Vagina (tissue), 2 donors: ENCODE measurements at regions of chr15 and their contacts with region 1.

Region 1: GRCh38 chr15:57743424-57743823 is 36.9 kb downstream of the POLR2M start:
- DNase-seq: no peak
- H3K4me3 ChIP-seq: no peak overlapping the region
- H3K27ac ChIP-seq: no peak overlapping the region
- H3K4me1 ChIP-seq: peaks cover 17% of the 10 kb centered on the region
- H3K27me3 ChIP-seq: no peaks in the 10 kb centered on the region
- CTCF ChIP-seq: no peak
- POLR2A ChIP-seq: no peak

Region 2: DNA sequence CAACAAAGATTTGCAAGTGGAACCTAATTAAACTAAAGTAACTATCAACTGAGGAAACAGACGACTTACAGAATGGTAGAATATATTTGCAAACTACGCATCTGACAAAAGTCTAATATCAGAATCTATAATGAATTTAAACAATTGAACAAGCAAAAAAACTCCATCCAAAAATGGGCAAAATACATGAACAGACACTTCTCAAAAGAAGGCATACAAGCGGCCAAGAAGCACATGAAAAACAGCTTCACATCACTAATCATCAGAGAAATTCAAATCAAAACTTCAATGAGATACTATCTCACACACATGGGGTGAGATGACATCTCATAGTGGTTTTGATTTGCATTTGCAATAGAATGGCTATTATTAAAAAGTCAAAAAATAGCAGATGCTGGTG is 91.7 kb after region 1 on chr15:
- intact Hi-C with region 1: no loop called
- DNase-seq: no peak
- H3K4me3 ChIP-seq: no peak overlapping the region
- H3K27ac ChIP-seq: no peak overlapping the region
- H3K4me1 ChIP-seq: no peaks in the 10 kb centered on the region
- H3K27me3 ChIP-seq: no peaks in the 10 kb centered on the region
- CTCF ChIP-seq: no peak
- POLR2A ChIP-seq: no peak

Region 3: DNA sequence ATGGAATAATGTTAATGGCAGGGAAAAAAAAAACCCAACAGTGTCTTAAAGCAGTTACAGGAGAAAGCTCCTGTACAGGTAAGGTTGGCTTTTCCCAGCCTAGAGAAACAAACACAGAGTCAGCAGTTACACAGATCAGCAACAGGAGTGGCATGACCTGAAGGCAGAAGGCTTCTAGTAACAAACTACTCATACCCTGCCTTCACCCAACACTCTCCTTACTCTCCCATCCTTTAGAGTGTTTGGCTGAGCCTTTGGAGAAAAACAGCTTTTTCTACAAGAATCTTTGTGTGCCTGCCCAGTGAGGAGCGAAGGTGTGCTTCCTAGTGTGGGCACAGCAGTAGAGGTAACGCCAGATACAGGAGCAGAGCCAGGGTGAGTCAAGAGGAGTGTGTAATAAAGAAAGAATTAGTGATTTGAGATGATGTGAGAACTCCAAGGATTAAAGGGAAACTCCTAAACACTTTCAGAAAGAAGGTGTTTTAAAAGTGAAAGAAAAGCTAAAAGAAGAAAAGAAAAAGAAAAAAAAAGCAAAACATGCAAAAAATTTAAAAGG is 115.8 kb after region 1 on chr15:
- intact Hi-C with region 1: loop called (anchors 10 kb)
- DNase-seq: no peak
- H3K4me3 ChIP-seq: no peak overlapping the region
- H3K27ac ChIP-seq: no peak overlapping the region
- H3K4me1 ChIP-seq: no peaks in the 10 kb centered on the region
- H3K27me3 ChIP-seq: no peaks in the 10 kb centered on the region
- CTCF ChIP-seq: no peak
- POLR2A ChIP-seq: no peak